ENCODE measurements at regions of chr11 and their contacts with region 1.

Region 1: GRCh38 chr11:88535916-88536547 is 198.5 kb upstream of the CTSC start:
- DNase-seq: no peak
- H3K4me3 ChIP-seq: no peak overlapping the region
- CTCF ChIP-seq: no peak

Region 2: DNA sequence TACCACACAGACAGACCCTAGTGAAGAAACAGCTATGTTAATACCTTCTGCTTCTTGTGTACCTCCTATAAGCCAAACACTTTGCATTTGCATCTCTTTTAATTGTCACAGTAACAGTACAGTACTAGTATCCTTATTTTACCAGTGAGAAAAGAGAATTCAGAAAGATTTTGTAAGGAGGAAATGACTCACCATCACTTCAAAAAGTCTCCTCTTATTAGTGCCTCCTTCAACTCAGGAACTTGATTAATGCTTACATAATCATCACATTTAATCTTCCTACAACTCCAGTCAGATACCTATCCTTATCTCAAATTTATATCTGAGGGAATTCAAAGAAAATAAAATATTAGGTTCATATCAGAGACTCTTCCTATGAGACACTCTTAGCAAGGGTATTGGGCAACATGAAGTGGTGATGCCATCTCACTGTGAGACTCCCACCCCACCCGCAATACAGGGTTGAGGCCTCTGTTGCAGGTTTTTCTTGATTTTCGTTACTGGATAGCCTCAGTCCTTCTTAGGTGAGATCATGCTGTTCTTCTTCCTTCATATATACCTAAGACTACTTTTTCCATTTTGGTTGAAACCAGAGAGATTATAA is 172.4 kb before region 1 on chr11:
- CTCF ChIA-PET with region 1: no interaction called
- POLR2A ChIA-PET with region 1: no interaction called
- DNase-seq: no peak
- H3K4me3 ChIP-seq: no peak overlapping the region
- CTCF ChIP-seq: no peak

Region 3: GRCh38 chr11:88552377-88553062 is 16.5 kb after region 1 on chr11:
- CTCF ChIA-PET with region 1: interaction called, 61 read pairs
- POLR2A ChIA-PET with region 1: no interaction called
- DNase-seq: no peak
- H3K4me3 ChIP-seq: no peak overlapping the region
- CTCF ChIP-seq: peak; percentile 75

Region 4: DNA sequence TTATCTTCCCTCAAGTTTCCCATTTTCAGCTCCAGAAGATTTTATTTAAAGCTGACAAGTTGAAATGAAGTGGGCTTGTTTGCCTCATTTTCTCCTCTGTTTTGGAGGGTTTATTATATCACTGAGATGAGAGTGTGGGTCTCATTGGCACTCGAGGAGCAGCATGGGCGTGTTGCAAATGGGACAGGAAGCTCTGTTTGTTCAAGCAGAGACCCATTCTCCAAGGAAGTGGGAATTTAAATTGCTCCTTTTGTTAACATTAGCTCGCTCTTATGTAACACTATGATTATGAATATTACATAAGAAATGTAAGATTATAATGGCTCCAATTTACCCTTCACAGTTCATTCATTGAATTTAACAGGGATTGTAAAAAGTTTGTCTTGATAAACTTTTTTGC is 119.2 kb after region 1 on chr11:
- CTCF ChIA-PET with region 1: no interaction called
- POLR2A ChIA-PET with region 1: no interaction called
- DNase-seq: no peak
- H3K4me3 ChIP-seq: no peak overlapping the region
- CTCF ChIP-seq: no peak